A673 (cell line): ENCODE measurements at regions of chr22 and their contacts with region 1.

Region 1: GRCh38 chr22:45656577-45656976 is 15.1 kb upstream of the ATXN10 start:
- DNase-seq: no peak
- H3K4me3 ChIP-seq: no peak overlapping the region
- H3K27ac ChIP-seq: no peak overlapping the region
- H3K4me1 ChIP-seq: no peaks in the 10 kb centered on the region
- H3K27me3 ChIP-seq: no peaks in the 10 kb centered on the region
- CTCF ChIP-seq: no peak

Region 2: DNA sequence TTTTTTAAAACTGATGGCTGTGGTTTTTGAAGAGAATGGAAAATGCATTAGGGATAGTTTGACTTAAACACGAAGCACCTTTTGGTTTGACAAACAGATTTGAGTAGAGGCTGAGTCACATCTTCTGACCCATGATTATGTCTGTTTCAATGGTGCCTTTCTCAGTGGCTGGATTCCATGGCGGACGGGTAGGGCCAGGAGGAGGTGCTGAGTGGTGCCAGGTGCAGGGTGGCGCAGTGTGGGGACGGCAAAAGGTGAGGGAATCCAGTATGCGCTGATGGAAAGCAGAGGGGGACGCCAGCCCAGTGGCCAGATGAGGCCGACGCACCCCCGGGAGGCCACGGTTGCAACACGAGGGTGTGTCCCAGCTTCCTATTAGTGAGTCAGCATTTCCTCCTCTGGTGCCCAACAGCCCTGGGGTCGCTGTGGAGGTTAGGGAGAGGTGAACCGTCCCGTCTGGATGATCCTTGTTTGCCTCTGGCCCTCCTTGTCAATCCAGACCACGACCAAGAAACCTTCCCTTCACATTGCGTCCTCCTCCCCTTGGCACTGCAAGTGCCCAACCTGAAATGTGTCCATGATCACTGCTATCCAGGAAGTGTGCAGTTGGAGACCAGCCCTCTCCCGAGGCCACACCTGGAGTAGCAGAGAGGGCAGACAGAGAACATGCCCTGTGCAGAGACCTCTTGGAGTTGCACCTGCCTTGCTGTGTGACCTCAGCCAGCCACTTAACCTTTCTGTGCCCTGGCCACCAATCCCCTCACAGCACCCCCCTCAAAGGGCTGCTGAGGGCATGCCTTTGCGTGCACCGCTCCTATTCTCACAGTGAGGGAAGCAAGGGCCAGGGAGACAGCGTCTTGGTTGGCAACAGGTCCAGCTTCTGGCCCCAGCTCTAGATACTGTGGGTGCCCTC is 17.5 kb before region 1 on chr22:
- CTCF ChIA-PET with region 1: no interaction called
- POLR2A ChIA-PET with region 1: no interaction called
- intact Hi-C with region 1: no loop called
- DNase-seq: no peak
- H3K4me3 ChIP-seq: no peak overlapping the region
- H3K27ac ChIP-seq: no peak overlapping the region
- H3K4me1 ChIP-seq: no peaks in the 10 kb centered on the region
- H3K27me3 ChIP-seq: peaks cover 5% of the 10 kb centered on the region
- CTCF ChIP-seq: no peak

Region 3: DNA sequence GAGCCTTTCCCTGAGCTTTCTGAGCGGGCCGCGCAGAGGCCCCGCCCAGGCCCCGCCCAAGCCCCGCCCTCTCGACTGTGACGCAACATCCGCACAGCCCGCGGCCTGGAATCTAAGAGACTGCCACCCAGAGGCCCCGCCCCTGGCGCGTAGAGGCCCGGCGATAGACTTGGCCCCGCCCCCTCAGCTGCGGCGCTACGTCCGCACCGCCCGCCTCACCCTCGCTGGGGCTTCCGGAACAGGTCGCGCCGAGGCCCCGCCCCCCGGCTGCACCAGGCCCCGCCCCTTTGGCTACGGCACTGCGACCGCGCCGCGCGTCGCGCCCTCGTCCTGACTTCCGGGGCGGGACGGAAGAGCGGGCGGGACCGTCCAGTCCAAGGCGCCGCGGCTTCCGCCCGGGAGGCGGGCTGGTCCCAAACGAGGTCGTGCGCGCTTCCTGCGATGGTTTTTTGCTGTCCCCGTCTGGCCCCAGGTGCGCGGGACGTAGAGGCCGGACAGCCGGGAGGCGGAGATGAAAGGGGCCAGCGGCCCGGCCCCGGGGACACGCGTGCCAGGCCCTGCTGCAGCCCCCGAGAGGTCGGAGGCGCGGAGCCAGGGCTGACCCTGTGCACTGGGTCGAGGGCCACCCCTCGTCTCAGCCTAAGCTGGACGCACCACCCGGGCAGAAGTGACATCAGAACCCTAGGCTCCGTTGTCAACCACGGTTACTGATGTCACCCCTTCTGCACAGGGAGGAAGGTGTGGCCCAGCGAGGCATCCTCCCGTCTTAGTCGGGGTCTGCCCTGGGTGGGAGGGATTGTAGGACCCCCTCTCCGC is 379.4 kb after region 1 on chr22:
- CTCF ChIA-PET with region 1: no interaction called
- POLR2A ChIA-PET with region 1: interaction called, 13 read pairs
- intact Hi-C with region 1: no loop called
- DNase-seq: peak; percentile 99
- H3K4me3 ChIP-seq: peak overlapping the region; percentile 98
- H3K27ac ChIP-seq: peak overlapping the region; percentile 91
- H3K4me1 ChIP-seq: peaks cover 10% of the 10 kb centered on the region
- H3K27me3 ChIP-seq: no peaks in the 10 kb centered on the region
- CTCF ChIP-seq: no peak